Cardiac septum (tissue), 1 donor: ENCODE measurements at regions of chr18 and their contacts with region 1.

Region 1: GRCh38 chr18:58043491-58044379 is at the start of gene NEDD4L:
- DNase-seq: peak; percentile 85
- total RNA-seq, gene NEDD4L: 49.3 TPM

Region 2: GRCh38 chr18:57621246-57621604 is 422.5 kb before region 1 on chr18:
- intact Hi-C with region 1: loop called (anchors 5 kb)
- DNase-seq: no peak

Region 3: DNA sequence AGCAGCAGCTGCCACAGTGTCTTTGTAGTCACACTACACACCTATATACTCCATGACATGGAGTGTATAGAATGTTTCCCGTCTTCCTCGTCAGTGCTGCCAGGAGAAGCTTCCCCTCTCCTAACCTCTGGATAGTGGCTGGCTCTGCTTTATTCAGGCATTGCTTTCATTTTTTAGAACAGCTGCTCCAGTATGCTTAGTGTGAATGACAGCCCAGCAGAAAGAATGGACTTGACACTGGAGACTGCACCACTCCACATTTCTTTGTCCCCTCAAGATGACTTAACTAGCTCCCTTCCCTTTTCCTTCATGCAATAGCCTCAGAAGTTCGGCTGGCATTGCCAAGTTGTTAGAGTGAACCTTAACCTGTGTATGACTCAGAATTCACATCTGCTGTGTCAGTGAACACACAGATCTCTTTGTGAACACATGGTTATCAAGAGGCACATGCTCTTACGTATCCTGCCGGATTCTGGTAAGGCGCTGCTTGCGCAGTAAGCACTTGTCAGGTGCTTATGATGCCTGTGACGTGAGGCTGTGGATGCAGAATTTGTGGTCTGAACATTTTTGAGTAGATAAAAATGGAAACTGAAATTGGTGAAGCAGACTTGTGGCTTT is 74.2 kb after region 1 on chr18:
- intact Hi-C with region 1: loop called (anchors 2 kb)
- DNase-seq: no peak